Posterior cingulate gyrus (tissue), 11 donors: ENCODE measurements at regions of chr15 and their contacts with region 1.

Region 1: GRCh38 chr15:86231864-86232721 is 152.4 kb downstream of the AGBL1 start:
- DNase-seq: peak in 6 of 10 donors; percentile 16 to 82 (median 36)

Region 2: DNA sequence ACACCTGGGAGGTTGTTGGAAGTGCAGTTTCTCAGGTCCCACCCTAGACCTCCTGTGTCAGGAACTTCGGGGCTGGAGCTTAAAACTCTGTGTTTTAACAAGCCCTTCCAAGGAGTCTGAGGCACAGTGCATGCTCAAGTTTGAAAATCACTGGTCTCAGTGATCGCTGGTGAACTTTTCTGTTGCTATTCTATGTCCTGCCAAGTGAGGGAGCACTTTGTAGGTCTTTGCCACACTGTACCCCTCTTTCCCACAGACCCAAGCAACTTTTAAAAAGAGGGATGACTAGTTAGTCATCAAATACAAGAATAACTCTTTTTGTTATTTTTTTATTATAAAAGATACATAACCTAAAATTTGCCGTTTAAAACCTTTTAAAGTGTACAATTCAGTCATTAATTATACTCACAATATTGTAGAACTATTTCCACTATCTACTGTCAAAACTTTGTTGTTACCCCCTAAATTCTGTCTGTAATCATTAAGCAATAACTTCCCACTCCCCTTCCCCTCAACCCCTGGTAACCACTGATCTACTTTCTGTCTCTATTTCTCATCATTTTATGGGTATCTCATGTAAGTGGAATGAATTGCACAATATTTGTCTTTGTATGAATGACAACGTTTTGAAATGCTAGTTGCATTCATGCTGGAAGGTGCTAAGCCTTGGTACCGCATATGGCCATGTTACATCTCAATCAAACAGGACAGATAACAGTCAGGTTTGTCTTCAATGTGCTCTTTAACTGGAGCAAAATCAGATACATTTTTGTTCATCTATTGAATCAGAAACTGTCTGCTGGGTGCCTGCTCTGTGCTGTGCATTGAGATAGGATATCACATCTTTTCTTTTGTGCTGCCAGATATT is 18.4 kb before region 1 on chr15:
- intact Hi-C with region 1: no loop called
- DNase-seq: no peak

Region 3: GRCh38 chr15:86756692-86757091 is 524.6 kb after region 1 on chr15:
- intact Hi-C with region 1: loop called (anchors 10 kb)
- DNase-seq: no peak